Gastrocnemius medialis (tissue), 4 donors: ENCODE measurements at regions of chr4 and their contacts with region 1.

Region 1: GRCh38 chr4:100414016-100414790 is 103.6 kb downstream of the EMCN start:
- DNase-seq: peak; percentile 74 to 85
- ATAC-seq: peak; percentile 98 to 99
- H3K4me3 ChIP-seq: no peak overlapping the region
- H3K27ac ChIP-seq: peak overlapping the region; percentile 52 to 82 (median 78)
- H3K4me1 ChIP-seq: peaks cover 0 to 36% of the 10 kb centered on the region in 2 donors
- H3K27me3 ChIP-seq: no peaks in the 10 kb centered on the region
- CTCF ChIP-seq: peak in 1 of 5 experiments; percentile 38
- POLR2A ChIP-seq: no peak

Region 2: GRCh38 chr4:100162027-100162685 is 252.0 kb before region 1 on chr4:
- in situ Hi-C with region 1: no loop called
- intact Hi-C with region 1: no loop called
- DNase-seq: no peak
- ATAC-seq: no peak
- H3K4me3 ChIP-seq: no peak overlapping the region
- H3K27ac ChIP-seq: no peak overlapping the region
- H3K4me1 ChIP-seq: peaks cover 25 to 33% of the 10 kb centered on the region in 2 donors
- H3K27me3 ChIP-seq: no peaks in the 10 kb centered on the region
- CTCF ChIP-seq: no peak
- POLR2A ChIP-seq: no peak

Region 3: DNA sequence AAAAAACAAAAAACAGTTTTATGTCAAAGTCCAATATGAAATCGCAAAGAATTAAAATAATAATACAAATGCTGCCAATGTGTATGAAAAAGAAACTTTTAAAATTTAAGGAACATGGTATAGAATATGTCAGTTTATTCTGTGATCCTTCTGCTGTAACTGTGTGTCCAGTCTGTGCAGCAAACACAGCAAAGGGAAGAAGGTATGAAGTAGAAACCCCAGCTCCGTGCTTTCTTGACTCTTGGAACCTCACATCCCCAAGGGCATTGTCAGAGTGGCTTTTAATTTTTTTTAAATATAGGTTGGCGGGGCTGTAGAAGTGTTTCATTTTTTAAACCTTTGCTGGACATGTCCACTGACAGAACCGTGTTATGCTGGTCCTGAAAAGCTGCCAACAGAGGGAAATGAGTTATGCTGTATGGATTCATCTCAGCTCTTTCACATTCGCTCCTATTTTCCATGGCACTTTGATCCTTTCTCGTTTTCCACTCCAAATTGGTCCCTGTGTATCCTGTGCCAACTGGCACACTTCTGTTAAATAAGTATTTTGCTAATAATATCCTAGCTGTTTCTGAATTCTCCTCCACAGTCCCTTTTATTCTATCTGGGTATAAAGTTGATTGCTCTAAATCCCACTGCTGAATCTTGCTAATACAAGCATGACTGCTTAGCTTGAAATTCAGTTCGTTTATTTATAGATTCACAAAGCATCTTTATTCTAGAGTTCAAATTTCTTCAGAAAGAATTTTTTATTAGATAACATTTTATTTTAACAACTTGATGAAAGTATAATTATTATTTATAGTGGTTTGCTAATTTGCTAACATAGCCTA is 97.0 kb before region 1 on chr4:
- in situ Hi-C with region 1: loop called in 1 of 4 experiments (anchors 10 kb)
- intact Hi-C with region 1: loop called (anchors 10 kb)
- DNase-seq: no peak
- ATAC-seq: no peak
- H3K4me3 ChIP-seq: peak overlapping the region; percentile 16 to 25 (median 22)
- H3K27ac ChIP-seq: peak overlapping the region; percentile 46 to 65 (median 61)
- H3K4me1 ChIP-seq: peaks cover 20 to 34% of the 10 kb centered on the region in 2 donors
- H3K27me3 ChIP-seq: no peaks in the 10 kb centered on the region
- CTCF ChIP-seq: no peak
- POLR2A ChIP-seq: no peak